ENCODE measurements at regions of chr17 and their contacts with region 1.

Region 1: DNA sequence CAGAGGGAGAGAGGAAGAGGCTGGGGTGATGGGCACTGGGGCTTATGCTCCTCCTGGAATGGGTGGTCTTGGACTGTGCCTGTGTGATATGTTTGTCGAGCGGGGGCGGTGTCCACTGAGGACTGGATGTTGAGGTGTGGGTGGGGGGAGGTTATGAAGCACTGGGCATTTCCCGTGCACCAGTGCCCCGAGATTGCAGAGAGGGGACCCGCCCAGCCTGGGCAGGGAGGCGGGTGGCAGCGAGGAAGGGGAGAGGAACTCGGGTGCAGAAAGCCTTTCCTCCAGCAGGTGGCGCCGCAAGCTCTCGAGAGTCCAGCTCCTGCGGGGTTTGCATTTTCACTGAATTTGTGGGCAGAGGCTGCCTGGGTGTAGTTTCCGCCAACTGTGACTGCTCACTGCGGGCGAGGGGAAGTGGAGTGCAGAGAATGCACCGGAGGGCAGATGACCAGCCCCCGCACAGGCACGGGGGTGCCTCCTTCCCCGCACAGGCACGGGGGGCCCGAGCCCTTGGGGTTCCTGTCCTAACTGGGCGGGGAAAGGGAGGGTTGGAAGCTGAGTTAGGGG is 190.6 kb downstream of the SEC14L1 start:
- DNase-seq: peak; percentile 75
- ATAC-seq: peak; percentile 95
- H3K4me3 ChIP-seq: peak overlapping the region; percentile 39; the same call in 1 of the 2 replicates
- H3K27ac ChIP-seq: peak overlapping the region; percentile 51
- H3K4me1 ChIP-seq: peaks cover 23% of the 10 kb centered on the region
- H3K27me3 ChIP-seq: no peaks in the 10 kb centered on the region
- CTCF ChIP-seq: peak; percentile 91 to 98 (median 93)
- EP300 ChIP-seq: no peak
- POLR2A ChIP-seq: peak; percentile 57; the same call in 1 of the 2 replicates
- RAD21 ChIP-seq: peak; percentile 96

Region 2: GRCh38 chr17:77319211-77320043 is 12.0 kb before region 1 on chr17:
- CTCF ChIA-PET with region 1: interaction called, 9 read pairs
- POLR2A ChIA-PET with region 1: interaction called, 4 read pairs
- RAD21 ChIA-PET with region 1: interaction called, 20 read pairs
- SMC1A ChIA-PET with region 1: interaction called, 25 read pairs
- in situ Hi-C with region 1: no loop called
- intact Hi-C with region 1: no loop called
- DNase-seq: no peak
- ATAC-seq: peak; percentile 43
- H3K4me3 ChIP-seq: peak overlapping the region; percentile 84
- H3K27ac ChIP-seq: peak overlapping the region; percentile 88
- H3K4me1 ChIP-seq: peaks cover 50% of the 10 kb centered on the region
- H3K27me3 ChIP-seq: no peaks in the 10 kb centered on the region
- CTCF ChIP-seq: no peak
- EP300 ChIP-seq: peak in 1 of 2 experiments; percentile 46; a peak in 1 of 4 replicates
- POLR2A ChIP-seq: peak; percentile 82
- RAD21 ChIP-seq: no peak

Region 3: GRCh38 chr17:77372444-77373298 is 41.3 kb after region 1 on chr17:
- CTCF ChIA-PET with region 1: interaction called, 7 read pairs
- POLR2A ChIA-PET with region 1: no interaction called
- RAD21 ChIA-PET with region 1: interaction called, 4 read pairs
- SMC1A ChIA-PET with region 1: interaction called, 6 read pairs
- in situ Hi-C with region 1: no loop called
- intact Hi-C with region 1: loop called (anchors 5 kb)
- DNase-seq: no peak
- ATAC-seq: peak; percentile 89
- H3K4me3 ChIP-seq: peak overlapping the region; percentile 58
- H3K27ac ChIP-seq: peak overlapping the region; percentile 69
- H3K4me1 ChIP-seq: peaks cover 41% of the 10 kb centered on the region
- H3K27me3 ChIP-seq: no peaks in the 10 kb centered on the region
- CTCF ChIP-seq: no peak
- EP300 ChIP-seq: no peak
- POLR2A ChIP-seq: peak; percentile 37; the same call in 1 of the 2 replicates
- RAD21 ChIP-seq: no peak

Region 4: DNA sequence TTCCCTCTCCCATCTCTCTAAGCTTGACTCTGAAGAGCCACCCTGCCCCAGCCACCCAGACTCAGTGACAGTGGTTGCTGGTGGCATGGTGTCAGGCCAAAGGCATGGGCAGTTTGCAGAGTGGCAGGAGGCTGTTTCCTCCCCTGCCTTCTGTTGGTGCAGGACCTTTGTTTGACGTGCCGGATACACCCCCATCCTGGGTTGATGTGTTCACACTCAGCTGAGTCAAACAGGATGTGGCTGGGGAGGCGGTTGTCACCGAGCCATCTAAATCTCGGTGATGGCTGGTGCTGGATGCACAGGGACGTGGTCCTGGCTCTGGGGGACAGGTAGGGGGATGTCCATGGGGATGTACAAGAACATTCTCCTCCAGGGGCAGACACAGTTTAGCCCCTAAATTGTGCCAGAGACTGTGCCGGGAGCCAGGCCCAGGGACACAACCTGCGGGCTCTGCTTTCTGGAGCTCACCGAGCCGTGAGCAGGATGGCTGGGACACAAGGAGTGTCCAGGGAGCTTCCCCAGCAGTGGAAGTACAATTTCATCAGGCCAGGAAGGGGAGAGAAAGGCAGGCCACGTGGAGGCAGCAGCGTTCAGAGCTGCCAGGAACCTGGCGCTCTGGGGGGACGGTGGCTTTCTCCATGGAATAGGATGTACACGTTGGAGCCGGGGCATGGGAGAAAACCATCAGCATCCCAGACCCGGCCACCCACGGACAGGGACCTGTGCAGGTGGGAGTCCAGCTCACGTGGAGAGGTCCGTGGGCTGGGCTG is 73.6 kb after region 1 on chr17:
- CTCF ChIA-PET with region 1: interaction called, 25 read pairs
- POLR2A ChIA-PET with region 1: interaction called, 6 read pairs
- RAD21 ChIA-PET with region 1: interaction called, 15 read pairs
- SMC1A ChIA-PET with region 1: interaction called, 30 read pairs
- in situ Hi-C with region 1: no loop called
- intact Hi-C with region 1: loop called (anchors 2 kb)
- DNase-seq: peak; percentile 60
- ATAC-seq: peak; percentile 93
- H3K4me3 ChIP-seq: peak overlapping the region; percentile 59; the same call in 1 of the 2 replicates
- H3K27ac ChIP-seq: peak overlapping the region; percentile 77
- H3K4me1 ChIP-seq: peaks cover 36% of the 10 kb centered on the region
- H3K27me3 ChIP-seq: no peaks in the 10 kb centered on the region
- CTCF ChIP-seq: peak in 1 of 3 experiments; percentile 16; a peak in 1 of 6 replicates
- EP300 ChIP-seq: peak; percentile 27 to 44; a peak in 1 of 4 replicates
- POLR2A ChIP-seq: peak; percentile 78
- RAD21 ChIP-seq: no peak

Region 5: DNA sequence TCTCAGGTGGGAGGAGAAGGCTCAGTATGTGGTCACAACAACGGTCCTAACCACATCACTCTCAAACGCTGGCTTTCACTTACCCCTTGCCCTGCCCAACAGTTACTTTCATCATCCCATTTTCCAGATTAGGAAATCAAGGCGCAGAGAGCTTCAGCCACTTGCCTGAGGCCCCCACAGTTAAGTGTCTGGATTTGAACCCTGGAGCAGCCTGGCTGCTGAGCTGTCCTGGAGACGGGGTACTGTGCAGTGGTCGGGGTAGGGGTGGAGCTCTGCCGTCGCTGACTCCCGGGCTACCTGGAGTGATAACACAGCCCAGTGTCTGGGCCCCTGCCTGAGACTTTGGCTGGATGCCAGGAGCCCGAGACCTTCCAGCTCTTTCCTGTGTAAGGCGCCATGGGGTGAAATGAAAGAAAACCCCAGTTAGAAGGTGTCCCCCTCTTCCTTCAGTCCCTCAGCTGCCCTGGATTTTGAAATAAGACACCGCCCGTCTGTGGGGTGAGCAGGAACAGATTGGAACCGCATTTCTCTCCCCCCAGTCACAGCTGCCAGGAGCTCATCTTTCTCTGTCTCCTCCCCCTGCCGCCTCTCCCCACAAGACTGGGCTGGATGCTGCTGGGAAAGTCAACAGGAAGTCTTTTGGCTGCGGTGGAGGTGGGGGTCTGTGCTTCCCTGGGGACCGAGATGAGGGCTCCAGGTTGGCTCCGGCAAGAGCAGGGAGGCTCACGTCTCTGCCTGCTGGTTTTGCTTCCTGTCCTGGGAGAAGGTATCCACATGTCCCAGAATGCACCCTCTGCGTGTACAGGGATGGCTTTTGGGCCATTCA is 89.6 kb after region 1 on chr17:
- CTCF ChIA-PET with region 1: interaction called, 7 read pairs
- POLR2A ChIA-PET with region 1: no interaction called
- RAD21 ChIA-PET with region 1: interaction called, 56 read pairs
- SMC1A ChIA-PET with region 1: interaction called, 13 read pairs
- in situ Hi-C with region 1: loop called (anchors 25 kb)
- intact Hi-C with region 1: no loop called
- DNase-seq: no peak
- ATAC-seq: peak; percentile 75
- H3K4me3 ChIP-seq: peak overlapping the region; percentile 32; the same call in 1 of the 2 replicates
- H3K27ac ChIP-seq: peak overlapping the region; percentile 23
- H3K4me1 ChIP-seq: peaks cover 28% of the 10 kb centered on the region
- H3K27me3 ChIP-seq: no peaks in the 10 kb centered on the region
- CTCF ChIP-seq: no peak
- EP300 ChIP-seq: no peak
- POLR2A ChIP-seq: no peak
- RAD21 ChIP-seq: no peak

Region 6: GRCh38 chr17:77451245-77451893 is 120.0 kb after region 1 on chr17:
- CTCF ChIA-PET with region 1: interaction called, 3 read pairs
- POLR2A ChIA-PET with region 1: no interaction called
- RAD21 ChIA-PET with region 1: interaction called, 15 read pairs
- SMC1A ChIA-PET with region 1: interaction called, 9 read pairs
- in situ Hi-C with region 1: loop called (anchors 25 kb)
- intact Hi-C with region 1: no loop called
- DNase-seq: no peak
- ATAC-seq: peak; percentile 71
- H3K4me3 ChIP-seq: peak overlapping the region; percentile 94
- H3K27ac ChIP-seq: peak overlapping the region; percentile 99
- H3K4me1 ChIP-seq: peaks cover 50% of the 10 kb centered on the region
- H3K27me3 ChIP-seq: no peaks in the 10 kb centered on the region
- CTCF ChIP-seq: no peak
- EP300 ChIP-seq: no peak
- POLR2A ChIP-seq: peak; percentile 83
- RAD21 ChIP-seq: 0 out of 2 replicates have a peak, but pooled peaks have one; percentile 1

Region 7: GRCh38 chr17:77494664-77495435 is 163.5 kb after region 1 on chr17:
- CTCF ChIA-PET with region 1: interaction called, 45 read pairs
- POLR2A ChIA-PET with region 1: no interaction called
- RAD21 ChIA-PET with region 1: interaction called, 32 read pairs
- SMC1A ChIA-PET with region 1: interaction called, 26 read pairs
- in situ Hi-C with region 1: loop called (anchors 5 kb)
- intact Hi-C with region 1: loop called (anchors 1 kb)
- DNase-seq: no peak
- ATAC-seq: peak; percentile 89
- H3K4me3 ChIP-seq: no peak overlapping the region
- H3K27ac ChIP-seq: no peak overlapping the region
- H3K4me1 ChIP-seq: peaks cover 16% of the 10 kb centered on the region
- H3K27me3 ChIP-seq: no peaks in the 10 kb centered on the region
- CTCF ChIP-seq: peak; percentile 87 to 93 (median 92)
- EP300 ChIP-seq: no peak
- POLR2A ChIP-seq: peak; percentile 51; the same call in 1 of the 2 replicates
- RAD21 ChIP-seq: peak; percentile 85